ENCODE measurements at regions of chrX and their contacts with region 1.

Region 1: DNA sequence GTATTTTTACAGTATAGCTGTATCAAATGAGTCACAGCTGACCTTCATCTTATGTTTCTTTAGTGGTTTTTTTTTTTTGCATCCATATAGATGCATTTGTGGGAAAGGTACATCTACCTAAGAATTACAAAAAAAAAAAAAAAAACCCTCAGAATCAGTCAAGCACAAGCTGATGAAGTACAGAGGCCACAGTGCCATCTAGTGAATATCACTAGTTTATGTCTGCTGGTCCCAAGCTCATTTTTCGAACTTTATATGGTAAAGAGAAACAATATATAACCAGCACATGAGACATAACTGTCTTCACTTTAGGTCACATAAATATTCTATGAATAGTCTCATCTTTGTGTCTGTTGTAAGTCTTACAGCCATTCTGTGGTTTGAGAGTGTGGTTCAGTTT is 220.1 kb downstream of the DLG3 start:
- DNase-seq: peak in 1 of 2 donors; percentile 33
- ATAC-seq: no peak
- H3K4me3 ChIP-seq: no peak overlapping the region
- H3K4me3 Mint-ChIP-seq: no peak overlapping the region
- H3K27ac ChIP-seq: no peak overlapping the region
- H3K27ac Mint-ChIP-seq: no peak overlapping the region
- H3K4me1 ChIP-seq: no peaks in the 10 kb centered on the region
- H3K4me1 Mint-ChIP-seq: no peaks in the 10 kb centered on the region
- H3K27me3 ChIP-seq: no peaks in the 10 kb centered on the region
- H3K27me3 Mint-ChIP-seq: peaks cover 0 to 3% of the 10 kb centered on the region in 2 donors
- CTCF ChIP-seq: no peak

Region 2: DNA sequence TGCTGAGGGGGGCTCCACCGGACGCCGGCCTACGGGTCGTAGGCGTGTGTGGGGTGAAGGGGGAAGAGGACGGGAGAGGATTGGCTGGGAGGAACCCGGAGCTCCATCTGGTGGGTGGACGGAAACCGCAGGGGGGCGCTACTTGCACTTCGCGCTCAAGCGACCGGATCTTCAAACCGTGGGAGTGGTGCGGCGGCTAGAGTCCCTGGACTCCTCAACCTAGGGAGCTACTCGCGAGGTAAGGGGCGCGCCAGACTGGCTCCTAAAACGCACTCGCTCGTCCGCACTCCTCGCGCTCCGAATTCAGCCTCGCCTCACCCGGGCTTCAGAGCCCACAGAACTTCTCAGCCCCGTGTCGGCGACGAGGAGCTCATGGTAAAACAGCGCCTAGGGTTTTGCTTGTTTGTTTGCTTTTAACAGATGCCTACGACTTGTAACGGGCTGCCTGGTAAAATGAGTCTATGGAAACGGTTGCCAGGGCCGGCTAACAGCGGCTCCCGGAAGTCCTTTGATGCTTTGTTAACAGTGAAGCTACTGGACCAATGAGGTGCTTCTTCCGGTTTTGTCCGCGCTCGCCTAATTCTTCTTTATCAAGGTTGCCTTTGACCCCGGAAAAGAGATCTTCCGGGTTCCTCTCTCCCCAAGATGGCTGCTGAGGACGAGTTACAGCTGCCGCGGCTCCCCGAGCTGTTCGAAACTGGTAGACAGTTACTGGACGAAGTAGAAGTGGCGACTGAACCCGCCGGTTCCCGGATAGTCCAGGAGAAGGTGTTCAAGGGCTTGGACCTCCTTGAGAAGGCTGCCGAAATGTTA is 531.2 kb before region 1 on chrX and contains the start of gene IGBP1:
- intact Hi-C with region 1: no loop called
- DNase-seq: peak; percentile 57 to 91
- ATAC-seq: peak; percentile 84 to 94 (median 87)
- H3K4me3 ChIP-seq: peak within 1 kb of the TSS; percentile 81
- H3K4me3 Mint-ChIP-seq: peak within 1 kb of the TSS; percentile 97
- H3K27ac ChIP-seq: peak within 1 kb of the TSS; percentile 92
- H3K27ac Mint-ChIP-seq: peak within 1 kb of the TSS; percentile 93 to 97
- H3K4me1 ChIP-seq: peaks cover 11% of the 10 kb centered on the region
- H3K4me1 Mint-ChIP-seq: peaks cover 18 to 32% of the 10 kb centered on the region in 2 donors
- H3K27me3 ChIP-seq: no peaks in the 10 kb centered on the region
- H3K27me3 Mint-ChIP-seq: peaks cover 0 to 7% of the 10 kb centered on the region in 2 donors
- CTCF ChIP-seq: peak; percentile 48
- total RNA-seq, gene IGBP1: 39.4 to 40.7 (median 40.1) TPM

Region 3: DNA sequence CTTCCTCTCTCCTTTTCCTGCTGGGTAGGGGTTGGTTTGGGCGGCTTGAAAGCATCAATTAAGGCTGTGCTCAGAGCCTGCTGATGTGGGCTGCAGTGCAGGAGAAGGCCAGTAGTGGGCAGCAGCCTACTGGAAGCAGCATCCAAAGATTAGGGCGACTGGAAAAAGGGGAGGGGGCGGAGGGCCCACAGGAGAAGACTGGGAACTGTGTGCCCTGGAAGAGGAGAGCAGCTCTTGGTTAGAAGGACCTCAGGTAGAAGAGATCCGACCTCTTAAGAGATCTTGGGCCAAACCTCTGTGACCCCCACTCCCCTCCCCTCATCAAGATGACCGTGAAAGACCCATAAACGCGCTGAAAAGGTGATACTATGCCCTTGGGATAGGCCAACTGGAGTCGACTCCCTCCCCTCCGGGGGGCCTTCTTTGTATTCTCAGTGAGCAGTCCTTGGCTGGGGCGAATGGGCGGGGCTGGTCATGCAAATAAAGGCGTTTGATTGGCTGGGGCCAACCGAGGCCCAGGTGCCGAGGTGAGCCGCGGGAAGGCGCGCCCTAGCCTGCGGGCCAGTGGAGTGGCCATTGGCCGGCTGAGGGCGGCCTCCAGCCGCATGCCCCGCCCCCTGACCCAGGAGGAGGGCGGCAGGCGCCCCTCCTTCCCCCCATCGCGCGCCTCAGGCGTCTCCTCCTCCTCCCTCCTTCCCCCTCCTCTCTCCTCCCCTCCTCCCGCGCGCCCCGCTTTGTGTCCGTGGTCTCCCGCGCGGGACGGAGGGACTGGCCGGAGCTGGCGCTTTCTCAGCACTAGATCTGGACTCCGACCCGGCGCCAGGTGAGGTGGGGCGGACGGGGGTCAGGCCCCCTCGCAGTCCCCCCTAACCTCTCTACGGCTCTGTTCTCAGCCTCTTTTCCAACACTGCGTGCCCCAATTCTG is 210.0 kb before region 1 on chrX:
- intact Hi-C with region 1: loop called (anchors 10 kb)
- DNase-seq: peak; percentile 49 to 83
- ATAC-seq: peak; percentile 64 to 79 (median 73)
- H3K4me3 ChIP-seq: peak overlapping the region; percentile 47
- H3K4me3 Mint-ChIP-seq: peak overlapping the region; percentile 89
- H3K27ac ChIP-seq: peak overlapping the region; percentile 71
- H3K27ac Mint-ChIP-seq: peak overlapping the region; percentile 76 to 91
- H3K4me1 ChIP-seq: peaks cover 37% of the 10 kb centered on the region
- H3K4me1 Mint-ChIP-seq: peaks cover 24 to 50% of the 10 kb centered on the region in 2 donors
- H3K27me3 ChIP-seq: no peaks in the 10 kb centered on the region
- H3K27me3 Mint-ChIP-seq: no peaks in the 10 kb centered on the region
- CTCF ChIP-seq: peak; percentile 68